ENCODE measurements at regions of chr1 and their contacts with region 1.

Region 1: GRCh38 chr1:186212544-186213226 is 162.4 kb downstream of the TPR start:
- DNase-seq: no peak
- ATAC-seq: peak; percentile 93
- H3K4me3 ChIP-seq: no peak overlapping the region
- H3K27ac ChIP-seq: peak overlapping the region in 1 of 2 donors; percentile 25
- H3K4me1 ChIP-seq: peaks cover 0 to 2% of the 10 kb centered on the region in 2 donors
- H3K27me3 ChIP-seq: no peaks in the 10 kb centered on the region

Region 2: GRCh38 chr1:185720633-185721272 is 491.9 kb before region 1 on chr1:
- intact Hi-C with region 1: loop called (anchors 2 to 10 kb)
- DNase-seq: no peak
- ATAC-seq: peak; percentile 82
- H3K4me3 ChIP-seq: no peak overlapping the region
- H3K27ac ChIP-seq: no peak overlapping the region
- H3K4me1 ChIP-seq: no peaks in the 10 kb centered on the region
- H3K27me3 ChIP-seq: no peaks in the 10 kb centered on the region

Region 3: DNA sequence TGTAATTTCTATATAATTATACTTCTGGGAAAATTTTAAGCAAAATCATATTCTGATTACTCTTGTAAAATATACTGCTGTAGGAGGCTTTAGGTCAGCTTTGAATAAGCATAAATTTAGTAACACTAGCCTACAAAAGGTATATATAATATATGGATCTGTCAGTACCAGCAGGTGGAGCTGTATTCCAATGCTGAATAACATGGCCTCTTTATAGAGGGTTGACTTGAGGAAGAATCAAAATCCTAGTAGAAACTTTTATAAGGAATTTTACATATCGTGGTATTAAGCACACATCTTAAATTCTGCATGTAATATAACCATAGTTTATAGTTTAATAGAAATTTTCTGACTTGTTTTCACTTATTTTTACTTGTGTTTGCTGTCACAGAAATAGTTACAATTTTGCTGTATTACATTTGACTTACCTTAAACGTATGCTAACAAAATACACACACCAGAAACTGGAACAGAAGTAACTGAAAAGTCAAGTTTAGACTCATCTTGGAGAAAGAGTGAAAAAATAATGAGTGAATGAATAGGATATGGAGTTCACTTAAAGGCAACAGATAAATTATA is 399.2 kb before region 1 on chr1:
- intact Hi-C with region 1: loop called in 1 of 2 experiments (anchors 2 kb)
- DNase-seq: no peak
- ATAC-seq: no peak
- H3K4me3 ChIP-seq: no peak overlapping the region
- H3K27ac ChIP-seq: no peak overlapping the region
- H3K4me1 ChIP-seq: peaks cover 0 to 3% of the 10 kb centered on the region in 2 donors
- H3K27me3 ChIP-seq: no peaks in the 10 kb centered on the region

Region 4: GRCh38 chr1:186082235-186082937 is 130.3 kb before region 1 on chr1:
- intact Hi-C with region 1: no loop called
- DNase-seq: peak; percentile 74 to 86
- ATAC-seq: peak; percentile 40
- H3K4me3 ChIP-seq: no peak overlapping the region
- H3K27ac ChIP-seq: peak overlapping the region in 1 of 2 donors; percentile 54
- H3K4me1 ChIP-seq: no peaks in the 10 kb centered on the region
- H3K27me3 ChIP-seq: no peaks in the 10 kb centered on the region

Region 5: DNA sequence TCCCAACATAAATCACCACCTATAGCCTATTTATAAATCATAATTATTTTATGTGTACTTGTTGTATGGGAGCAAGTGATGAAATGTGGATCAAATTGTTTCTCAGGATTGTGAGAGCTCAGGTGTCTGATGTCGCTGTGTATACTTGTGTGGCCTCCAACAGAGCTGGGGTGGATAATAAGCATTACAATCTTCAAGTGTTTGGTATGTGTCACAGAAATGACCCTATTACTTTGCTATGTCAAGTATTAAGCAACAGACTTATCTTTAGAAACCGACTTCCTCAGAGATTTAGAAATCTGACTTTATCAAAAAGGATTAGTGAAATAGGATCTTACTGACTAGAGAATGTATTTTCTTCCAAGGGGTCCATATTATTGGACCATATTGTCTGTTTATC is 118.5 kb before region 1 on chr1:
- intact Hi-C with region 1: no loop called
- DNase-seq: no peak
- ATAC-seq: no peak
- H3K4me3 ChIP-seq: no peak overlapping the region
- H3K27ac ChIP-seq: no peak overlapping the region
- H3K4me1 ChIP-seq: peaks cover 0 to 3% of the 10 kb centered on the region in 2 donors
- H3K27me3 ChIP-seq: no peaks in the 10 kb centered on the region

Region 6: DNA sequence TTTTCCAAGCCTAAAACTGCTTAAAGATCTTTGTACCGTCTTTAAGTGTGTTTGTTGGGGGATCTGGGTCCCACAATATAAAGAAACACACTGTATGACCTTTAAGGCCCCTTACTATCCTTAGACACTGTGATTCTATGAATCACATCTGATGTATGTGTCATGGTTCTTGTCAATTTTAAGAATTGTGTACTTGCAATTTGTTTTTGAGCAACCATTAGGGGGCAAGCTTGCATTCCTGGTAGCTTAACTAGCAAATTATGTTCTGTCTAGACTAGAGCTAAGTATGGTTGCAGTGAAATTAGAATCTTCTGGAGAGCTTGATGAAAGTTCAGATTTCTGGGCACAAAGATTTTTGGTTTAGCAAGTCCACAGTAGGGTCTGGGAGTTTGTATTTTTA is 57.1 kb before region 1 on chr1:
- intact Hi-C with region 1: loop called in 1 of 2 experiments (anchors 5 kb)
- DNase-seq: no peak
- ATAC-seq: peak; percentile 85
- H3K4me3 ChIP-seq: no peak overlapping the region
- H3K27ac ChIP-seq: no peak overlapping the region
- H3K4me1 ChIP-seq: peaks cover 0 to 4% of the 10 kb centered on the region in 2 donors
- H3K27me3 ChIP-seq: no peaks in the 10 kb centered on the region

Measured in aorta (tissue), 5 donors.